Left colon (tissue), 2 donors: ENCODE measurements at regions of chr17 and their contacts with region 1.

Region 1: GRCh38 chr17:50783193-50783660 is 15.9 kb upstream of the ANKRD40CL start:
- DNase-seq: peak; percentile 74 to 83
- ATAC-seq: peak; percentile 95

Region 2: DNA sequence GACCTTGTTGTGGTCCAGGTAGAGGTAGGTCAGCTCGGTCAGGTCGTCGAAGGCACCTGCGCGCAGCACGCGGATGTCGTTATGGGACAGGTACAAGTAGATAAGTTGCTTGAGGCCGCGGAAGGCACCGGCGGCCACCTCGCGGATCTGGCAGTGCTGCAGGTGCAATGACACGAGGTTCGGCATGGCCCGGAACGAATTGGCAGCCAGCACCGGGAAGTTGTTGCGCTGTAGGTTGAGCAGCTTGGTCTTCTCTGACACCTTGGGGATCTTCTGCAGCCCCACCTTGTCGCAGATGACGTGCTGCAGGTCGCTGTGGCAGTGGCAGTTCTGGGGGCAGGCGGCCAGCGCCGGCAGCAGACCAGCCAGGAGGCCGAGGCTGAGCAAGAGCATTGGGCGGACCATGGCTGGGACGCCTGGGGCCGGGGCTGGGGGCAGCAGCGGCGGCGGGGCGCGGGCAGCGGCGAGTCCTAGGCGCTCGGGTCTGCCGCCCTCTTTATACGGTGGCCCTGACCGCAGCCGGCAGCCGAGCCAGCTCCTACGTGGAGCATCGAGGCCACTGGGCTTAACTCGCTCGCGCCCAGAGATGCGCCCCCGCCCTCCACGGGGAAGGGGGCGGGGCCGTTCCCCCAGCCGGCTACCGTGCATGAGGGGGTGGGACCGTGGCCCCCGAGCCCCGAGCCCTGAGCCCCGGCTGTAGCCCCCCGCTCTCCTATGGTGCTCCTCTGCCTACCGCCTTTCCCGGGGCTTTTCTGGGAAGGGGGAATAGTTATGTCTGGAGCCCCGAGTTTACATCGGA is 314.6 kb before region 1 on chr17 and contains the start of gene CHAD:
- intact Hi-C with region 1: no loop called
- DNase-seq: peak in 1 of 2 donors; percentile 26
- ATAC-seq: no peak
- total RNA-seq, gene CHAD: 4.5 to 7.1 TPM

Region 3: DNA sequence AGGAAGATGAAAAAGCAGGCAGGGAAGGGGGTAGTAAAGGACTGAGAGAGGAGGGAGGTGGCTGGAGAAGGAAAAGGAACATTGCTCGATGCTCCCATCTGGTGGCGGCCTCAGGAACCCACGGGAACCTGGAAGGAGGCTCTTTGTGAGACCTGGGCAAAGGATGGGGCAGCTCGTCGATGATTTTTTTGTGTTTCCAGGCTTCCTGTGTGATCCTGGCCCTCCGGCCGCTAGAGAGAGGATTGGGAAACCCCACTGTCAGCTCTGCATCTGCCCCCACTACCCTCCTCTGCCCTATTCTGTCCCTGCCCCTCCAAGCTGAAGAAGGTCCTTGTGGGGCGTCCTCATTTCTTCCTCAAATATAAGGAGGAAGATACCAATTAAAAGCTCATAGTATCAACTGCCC is 58.7 kb after region 1 on chr17:
- intact Hi-C with region 1: loop called in 1 of 2 experiments (anchors 5 kb)
- DNase-seq: peak; percentile 55 to 80
- ATAC-seq: peak; percentile 91

Region 4: GRCh38 chr17:50919321-50920085 is 136.3 kb after region 1 on chr17:
- intact Hi-C with region 1: no loop called
- DNase-seq: peak; percentile 92 to 97
- ATAC-seq: peak; percentile 74

Region 5: GRCh38 chr17:50949989-50950881 is 167.0 kb after region 1 on chr17:
- intact Hi-C with region 1: loop called in 1 of 2 experiments (anchors 10 kb)
- DNase-seq: peak; percentile 80 to 82
- ATAC-seq: peak; percentile 64